ENCODE measurements at regions of chr5 and their contacts with region 1.

Region 1: GRCh38 chr5:72816311-72817145 is at the start of gene TNPO1:
- DNase-seq: peak; percentile 96
- H3K4me3 Mint-ChIP-seq: peak within 1 kb of the TSS; percentile 93
- H3K27ac Mint-ChIP-seq: peak within 1 kb of the TSS; percentile 92
- H3K4me1 Mint-ChIP-seq: peaks cover 11% of the 10 kb centered on the region
- H3K27me3 Mint-ChIP-seq: peaks cover 19% of the 10 kb centered on the region
- total RNA-seq, gene TNPO1: 138 TPM in 2 replicates

Region 2: GRCh38 chr5:72366324-72366976 is 450.1 kb before region 1 on chr5:
- intact Hi-C with region 1: loop called (anchors 1 kb)
- DNase-seq: peak; percentile 79
- H3K4me3 Mint-ChIP-seq: no peak overlapping the region
- H3K27ac Mint-ChIP-seq: no peak overlapping the region
- H3K4me1 Mint-ChIP-seq: peaks cover 3% of the 10 kb centered on the region
- H3K27me3 Mint-ChIP-seq: no peaks in the 10 kb centered on the region

Region 3: GRCh38 chr5:72785801-72786200 is 30.7 kb before region 1 on chr5:
- intact Hi-C with region 1: no loop called
- DNase-seq: no peak
- H3K4me3 Mint-ChIP-seq: no peak overlapping the region
- H3K27ac Mint-ChIP-seq: no peak overlapping the region
- H3K4me1 Mint-ChIP-seq: no peaks in the 10 kb centered on the region
- H3K27me3 Mint-ChIP-seq: peaks cover 12% of the 10 kb centered on the region

Region 4: GRCh38 chr5:72837524-72838096 is 21.1 kb after region 1 on chr5:
- intact Hi-C with region 1: loop called (anchors 2 kb)
- DNase-seq: no peak
- H3K4me3 Mint-ChIP-seq: no peak overlapping the region
- H3K27ac Mint-ChIP-seq: no peak overlapping the region
- H3K4me1 Mint-ChIP-seq: no peaks in the 10 kb centered on the region
- H3K27me3 Mint-ChIP-seq: peaks cover 31% of the 10 kb centered on the region

Region 5: GRCh38 chr5:72860499-72860898 is 44.0 kb after region 1 on chr5:
- intact Hi-C with region 1: loop called (anchors 5 kb)
- DNase-seq: no peak
- H3K4me3 Mint-ChIP-seq: no peak overlapping the region
- H3K27ac Mint-ChIP-seq: peak overlapping the region; percentile 60
- H3K4me1 Mint-ChIP-seq: peaks cover 19% of the 10 kb centered on the region
- H3K27me3 Mint-ChIP-seq: no peaks in the 10 kb centered on the region

Region 6: GRCh38 chr5:72955768-72956323 is 139.3 kb after region 1 on chr5 and contains the start of gene FCHO2:
- intact Hi-C with region 1: loop called (anchors 5 kb)
- DNase-seq: peak; percentile 98
- H3K4me3 Mint-ChIP-seq: peak within 1 kb of the TSS; percentile 90
- H3K27ac Mint-ChIP-seq: peak within 1 kb of the TSS; percentile 85
- H3K4me1 Mint-ChIP-seq: peaks cover 13% of the 10 kb centered on the region
- H3K27me3 Mint-ChIP-seq: peaks cover 60% of the 10 kb centered on the region
- total RNA-seq, gene FCHO2: 0.33 and 1.5 TPM in 2 replicates